ENCODE measurements at regions of chr9 and their contacts with region 1.

Region 1: DNA sequence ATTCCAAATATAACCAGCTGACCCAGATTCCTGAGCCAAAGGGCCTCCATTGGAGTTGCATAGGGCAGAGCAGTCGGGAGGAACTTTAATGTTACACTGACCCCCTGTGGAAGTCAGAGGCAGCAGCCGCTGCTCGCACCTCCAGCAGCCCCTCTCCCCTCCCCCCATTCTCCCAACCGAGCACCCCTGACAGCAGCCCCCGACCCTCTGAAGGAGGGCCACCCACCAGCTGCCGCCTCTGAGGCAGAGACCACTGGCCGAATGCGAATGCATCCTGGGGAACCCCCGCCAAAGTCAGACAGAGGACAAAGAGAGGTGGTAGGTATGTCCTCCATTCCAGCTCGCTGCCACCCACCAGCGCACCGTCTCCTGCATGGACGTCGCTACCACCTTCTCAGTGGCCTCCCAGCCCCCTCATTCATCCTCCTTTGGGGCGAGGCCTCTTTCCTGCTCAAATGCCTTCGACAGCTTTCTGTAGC is 231.0 kb downstream of the CDK5RAP2 start:
- DNase-seq: peak; percentile 42
- H3K4me3 Mint-ChIP-seq: no peak overlapping the region
- H3K27ac Mint-ChIP-seq: no peak overlapping the region
- H3K4me1 Mint-ChIP-seq: no peaks in the 10 kb centered on the region
- H3K27me3 Mint-ChIP-seq: peaks cover 28% of the 10 kb centered on the region
- CTCF ChIP-seq: peak; percentile 34

Region 2: GRCh38 chr9:119968836-119969707 is 379.9 kb before region 1 on chr9:
- CTCF ChIA-PET with region 1: no interaction called
- intact Hi-C with region 1: loop called (anchors 10 kb)
- DNase-seq: peak; percentile 65
- H3K4me3 Mint-ChIP-seq: no peak overlapping the region
- H3K27ac Mint-ChIP-seq: no peak overlapping the region
- H3K4me1 Mint-ChIP-seq: no peaks in the 10 kb centered on the region
- H3K27me3 Mint-ChIP-seq: peaks cover 36% of the 10 kb centered on the region
- CTCF ChIP-seq: peak; percentile 57

Region 3: GRCh38 chr9:120366646-120367019 is 17.6 kb after region 1 on chr9:
- CTCF ChIA-PET with region 1: no interaction called
- intact Hi-C with region 1: no loop called
- DNase-seq: peak; percentile 7
- H3K4me3 Mint-ChIP-seq: no peak overlapping the region
- H3K27ac Mint-ChIP-seq: no peak overlapping the region
- H3K4me1 Mint-ChIP-seq: no peaks in the 10 kb centered on the region
- H3K27me3 Mint-ChIP-seq: peaks cover 24% of the 10 kb centered on the region
- CTCF ChIP-seq: no peak

Measured in Calu3 (cell line).